B cell (primary cell): ENCODE measurements at regions of chr7 and their contacts with region 1.

Region 1: GRCh38 chr7:18458830-18459229 is 36.7 kb upstream of the HDAC9 start:
- DNase-seq: no peak
- ATAC-seq: peak; percentile 17
- H3K4me3 ChIP-seq: no peak overlapping the region
- H3K4me3 Mint-ChIP-seq: no peak overlapping the region
- H3K27ac ChIP-seq: no peak overlapping the region
- H3K27ac Mint-ChIP-seq: peak overlapping the region; percentile 38
- H3K4me1 ChIP-seq: peaks cover 9 to 15% of the 10 kb centered on the region in 2 donors
- H3K4me1 Mint-ChIP-seq: peaks cover 32% of the 10 kb centered on the region
- H3K27me3 ChIP-seq: no peaks in the 10 kb centered on the region
- H3K27me3 Mint-ChIP-seq: no peaks in the 10 kb centered on the region
- CTCF ChIP-seq: no peak

Region 2: DNA sequence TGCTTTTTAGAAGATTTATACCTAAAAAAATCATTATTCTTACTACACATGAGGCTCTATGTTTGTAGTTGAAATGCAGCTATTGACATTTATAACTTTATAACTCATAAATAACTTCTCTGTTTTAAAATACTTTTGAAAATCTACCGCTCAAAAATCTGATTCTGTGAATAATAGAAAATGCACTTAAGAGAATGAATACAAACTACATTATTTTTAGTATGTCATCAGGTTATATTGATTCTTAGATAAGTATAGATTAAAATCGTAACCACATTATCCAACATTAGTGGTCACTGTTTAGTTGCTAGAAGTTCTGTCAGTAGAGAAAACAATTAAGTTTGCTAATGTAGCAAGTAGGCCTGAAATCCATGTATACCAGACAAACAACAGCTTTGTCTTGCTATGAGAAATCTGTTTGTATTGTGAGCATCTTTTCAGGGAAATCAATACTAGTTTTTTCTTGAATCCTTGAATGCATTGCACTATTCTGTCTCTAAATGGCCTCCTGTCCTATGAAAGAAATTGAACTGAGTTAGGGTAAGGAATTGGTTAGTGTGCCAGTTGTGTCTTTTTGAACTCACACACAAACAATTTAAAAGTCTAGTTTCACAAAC is 79.7 kb before region 1 on chr7:
- CTCF ChIA-PET with region 1: no interaction called
- POLR2A ChIA-PET with region 1: interaction called, 3 read pairs
- intact Hi-C with region 1: loop called (anchors 5 kb)
- DNase-seq: no peak
- ATAC-seq: no peak
- H3K4me3 ChIP-seq: no peak overlapping the region
- H3K4me3 Mint-ChIP-seq: no peak overlapping the region
- H3K27ac ChIP-seq: no peak overlapping the region
- H3K27ac Mint-ChIP-seq: no peak overlapping the region
- H3K4me1 ChIP-seq: no peaks in the 10 kb centered on the region
- H3K4me1 Mint-ChIP-seq: peaks cover 1% of the 10 kb centered on the region
- H3K27me3 ChIP-seq: no peaks in the 10 kb centered on the region
- H3K27me3 Mint-ChIP-seq: no peaks in the 10 kb centered on the region
- CTCF ChIP-seq: no peak

Region 3: DNA sequence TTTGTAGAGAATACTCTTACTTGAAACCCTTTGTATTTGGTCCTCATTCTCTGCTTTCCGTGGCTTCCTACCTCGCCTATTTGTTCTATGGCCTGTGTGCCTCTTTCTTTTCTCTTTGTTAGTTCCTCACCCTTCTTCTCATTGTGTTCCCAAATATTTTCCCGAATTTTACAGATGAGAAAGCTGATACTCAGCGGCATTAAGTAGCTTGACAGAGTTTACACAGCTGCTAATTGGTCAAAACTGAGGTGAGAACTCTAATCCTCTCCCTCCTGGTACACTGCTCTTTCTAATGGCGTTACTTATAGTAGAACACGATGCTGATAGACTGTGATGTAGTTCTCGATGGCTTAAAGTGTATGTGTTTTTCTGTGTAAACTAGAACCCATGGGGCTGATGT is 43.9 kb before region 1 on chr7:
- CTCF ChIA-PET with region 1: no interaction called
- POLR2A ChIA-PET with region 1: no interaction called
- intact Hi-C with region 1: loop called (anchors 5 kb)
- DNase-seq: no peak
- ATAC-seq: no peak
- H3K4me3 ChIP-seq: no peak overlapping the region
- H3K4me3 Mint-ChIP-seq: no peak overlapping the region
- H3K27ac ChIP-seq: no peak overlapping the region
- H3K27ac Mint-ChIP-seq: no peak overlapping the region
- H3K4me1 ChIP-seq: no peaks in the 10 kb centered on the region
- H3K4me1 Mint-ChIP-seq: peaks cover 2% of the 10 kb centered on the region
- H3K27me3 ChIP-seq: no peaks in the 10 kb centered on the region
- H3K27me3 Mint-ChIP-seq: no peaks in the 10 kb centered on the region
- CTCF ChIP-seq: no peak

Region 4: GRCh38 chr7:18471476-18472160 is 12.8 kb after region 1 on chr7:
- CTCF ChIA-PET with region 1: no interaction called
- POLR2A ChIA-PET with region 1: no interaction called
- intact Hi-C with region 1: no loop called
- DNase-seq: no peak
- ATAC-seq: no peak
- H3K4me3 ChIP-seq: no peak overlapping the region
- H3K4me3 Mint-ChIP-seq: no peak overlapping the region
- H3K27ac ChIP-seq: no peak overlapping the region
- H3K27ac Mint-ChIP-seq: peak overlapping the region; percentile 20
- H3K4me1 ChIP-seq: no peaks in the 10 kb centered on the region
- H3K4me1 Mint-ChIP-seq: peaks cover 14% of the 10 kb centered on the region
- H3K27me3 ChIP-seq: no peaks in the 10 kb centered on the region
- H3K27me3 Mint-ChIP-seq: no peaks in the 10 kb centered on the region
- CTCF ChIP-seq: no peak

Region 5: DNA sequence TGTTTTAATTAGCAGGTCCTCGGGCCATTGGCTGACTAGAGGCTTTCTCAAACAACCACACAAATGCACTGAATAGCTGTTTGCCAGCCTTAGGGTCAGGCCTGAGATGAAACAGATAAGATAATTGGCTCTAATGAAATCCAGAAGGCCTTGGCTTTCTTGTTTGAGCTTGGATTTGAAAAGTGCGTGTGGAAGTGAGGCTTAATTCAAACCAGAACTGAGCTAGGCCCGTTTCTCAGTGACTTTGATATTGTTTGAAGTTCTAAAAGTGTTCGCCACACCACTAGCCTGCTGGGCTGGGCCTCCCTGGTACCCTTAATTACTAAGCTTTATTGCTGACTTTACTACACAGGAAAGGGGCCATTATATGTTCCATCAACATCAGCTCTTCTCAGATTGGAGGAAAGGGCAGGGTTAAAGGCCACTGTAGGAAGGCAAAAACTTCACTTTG is 388.0 kb after region 1 on chr7:
- CTCF ChIA-PET with region 1: no interaction called
- POLR2A ChIA-PET with region 1: no interaction called
- intact Hi-C with region 1: no loop called
- DNase-seq: no peak
- ATAC-seq: no peak
- H3K4me3 ChIP-seq: no peak overlapping the region
- H3K4me3 Mint-ChIP-seq: no peak overlapping the region
- H3K27ac ChIP-seq: no peak overlapping the region
- H3K27ac Mint-ChIP-seq: no peak overlapping the region
- H3K4me1 ChIP-seq: no peaks in the 10 kb centered on the region
- H3K4me1 Mint-ChIP-seq: peaks cover 3% of the 10 kb centered on the region
- H3K27me3 ChIP-seq: no peaks in the 10 kb centered on the region
- H3K27me3 Mint-ChIP-seq: no peaks in the 10 kb centered on the region
- CTCF ChIP-seq: no peak

Region 6: GRCh38 chr7:18971839-18972238 is 513.0 kb after region 1 on chr7:
- CTCF ChIA-PET with region 1: no interaction called
- POLR2A ChIA-PET with region 1: no interaction called
- intact Hi-C with region 1: no loop called
- DNase-seq: no peak
- ATAC-seq: no peak
- H3K4me3 ChIP-seq: no peak overlapping the region
- H3K4me3 Mint-ChIP-seq: no peak overlapping the region
- H3K27ac ChIP-seq: no peak overlapping the region
- H3K27ac Mint-ChIP-seq: no peak overlapping the region
- H3K4me1 ChIP-seq: no peaks in the 10 kb centered on the region
- H3K4me1 Mint-ChIP-seq: no peaks in the 10 kb centered on the region
- H3K27me3 ChIP-seq: no peaks in the 10 kb centered on the region
- H3K27me3 Mint-ChIP-seq: no peaks in the 10 kb centered on the region
- CTCF ChIP-seq: no peak